AG04450 (cell line): ENCODE measurements at regions of chr17 and their contacts with region 1.

Region 1: GRCh38 chr17:1365445-1366039 is 34.5 kb downstream of the YWHAE start:
- DNase-seq: peak; percentile 72
- H3K4me3 ChIP-seq: no peak overlapping the region
- H3K27ac ChIP-seq: peak overlapping the region; percentile 47
- H3K27me3 ChIP-seq: no peaks in the 10 kb centered on the region
- CTCF ChIP-seq: peak; percentile 94

Region 2: DNA sequence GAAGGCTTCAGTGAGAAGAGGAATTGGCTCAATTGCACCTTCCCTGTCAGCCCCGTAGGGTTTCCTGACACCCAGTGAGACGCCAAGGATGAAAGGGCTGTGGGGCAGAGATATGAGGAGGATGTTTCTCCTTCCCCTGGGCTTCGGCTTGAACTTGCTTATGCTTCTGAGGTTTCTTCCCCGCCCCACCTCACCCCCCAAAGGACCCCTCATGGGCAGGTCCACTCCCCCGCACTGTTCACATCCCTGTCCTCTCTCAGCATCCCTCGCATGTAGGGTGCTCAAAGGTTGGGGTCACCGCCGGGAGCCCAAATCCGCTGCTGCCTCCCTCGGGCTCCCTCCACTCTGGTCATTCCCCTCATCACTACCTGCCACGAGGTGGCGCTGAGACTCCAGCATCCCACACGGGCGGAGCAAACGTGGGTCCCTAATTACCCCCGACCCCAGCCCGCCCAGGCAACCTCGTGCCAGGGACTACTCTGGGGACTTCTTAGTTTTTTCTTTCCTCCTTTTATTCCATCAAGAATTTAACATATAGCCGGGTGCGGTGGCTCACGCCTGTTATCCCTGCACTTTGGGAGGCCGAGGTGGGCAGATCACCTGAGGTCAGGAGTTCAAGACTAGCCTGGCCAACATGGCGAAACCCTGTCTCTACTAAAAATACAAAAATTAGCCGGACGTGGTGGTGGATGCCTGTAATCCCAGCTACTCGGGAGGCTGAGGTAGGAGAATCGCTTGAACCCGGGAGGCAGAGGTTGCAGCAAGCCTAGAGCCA is 89.4 kb before region 1 on chr17:
- CTCF ChIA-PET with region 1: no interaction called
- POLR2A ChIA-PET with region 1: no interaction called
- DNase-seq: no peak
- H3K4me3 ChIP-seq: no peak overlapping the region
- H3K27ac ChIP-seq: no peak overlapping the region
- H3K27me3 ChIP-seq: peaks cover 36% of the 10 kb centered on the region
- CTCF ChIP-seq: peak; percentile 85

Region 3: DNA sequence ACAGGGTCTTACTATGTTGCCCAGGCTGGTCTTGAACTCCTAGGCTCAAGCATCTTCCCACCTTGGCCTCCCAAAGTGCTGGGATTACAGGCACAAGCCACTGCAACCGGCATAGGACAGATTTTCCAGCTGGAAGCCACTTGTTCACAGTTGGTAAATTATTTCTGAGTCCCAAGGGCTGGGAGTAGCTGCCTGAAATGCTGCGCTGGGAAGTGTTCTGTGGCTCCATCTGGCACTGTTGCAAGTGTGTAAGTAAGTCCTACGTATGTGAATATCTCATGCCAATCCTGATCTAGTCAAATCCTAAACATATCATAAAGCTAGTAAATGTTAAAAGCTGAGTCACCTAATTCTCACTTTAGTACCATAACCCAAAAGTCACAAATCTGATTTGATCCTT is 13.6 kb before region 1 on chr17:
- CTCF ChIA-PET with region 1: interaction called, 22 read pairs
- POLR2A ChIA-PET with region 1: no interaction called
- DNase-seq: no peak
- H3K4me3 ChIP-seq: no peak overlapping the region
- H3K27ac ChIP-seq: no peak overlapping the region
- H3K27me3 ChIP-seq: no peaks in the 10 kb centered on the region
- CTCF ChIP-seq: no peak

Region 4: GRCh38 chr17:1384905-1385435 is 19.4 kb after region 1 on chr17:
- CTCF ChIA-PET with region 1: interaction called, 78 read pairs
- POLR2A ChIA-PET with region 1: interaction called, 4 read pairs
- DNase-seq: no peak
- H3K4me3 ChIP-seq: no peak overlapping the region
- H3K27ac ChIP-seq: no peak overlapping the region
- H3K27me3 ChIP-seq: no peaks in the 10 kb centered on the region
- CTCF ChIP-seq: no peak

Region 5: GRCh38 chr17:1399679-1400512 is 34.4 kb after region 1 on chr17 and contains the start of gene YWHAE:
- CTCF ChIA-PET with region 1: interaction called, 24 read pairs
- POLR2A ChIA-PET with region 1: interaction called, 15 read pairs
- DNase-seq: peak; percentile 78
- H3K4me3 ChIP-seq: peak within 1 kb of the TSS; percentile 88
- H3K27ac ChIP-seq: peak within 1 kb of the TSS; percentile 94
- H3K27me3 ChIP-seq: no peaks in the 10 kb centered on the region
- CTCF ChIP-seq: no peak
- polyA plus RNA-seq, gene YWHAE: 884 and 1,187 TPM in 2 replicates

Region 6: DNA sequence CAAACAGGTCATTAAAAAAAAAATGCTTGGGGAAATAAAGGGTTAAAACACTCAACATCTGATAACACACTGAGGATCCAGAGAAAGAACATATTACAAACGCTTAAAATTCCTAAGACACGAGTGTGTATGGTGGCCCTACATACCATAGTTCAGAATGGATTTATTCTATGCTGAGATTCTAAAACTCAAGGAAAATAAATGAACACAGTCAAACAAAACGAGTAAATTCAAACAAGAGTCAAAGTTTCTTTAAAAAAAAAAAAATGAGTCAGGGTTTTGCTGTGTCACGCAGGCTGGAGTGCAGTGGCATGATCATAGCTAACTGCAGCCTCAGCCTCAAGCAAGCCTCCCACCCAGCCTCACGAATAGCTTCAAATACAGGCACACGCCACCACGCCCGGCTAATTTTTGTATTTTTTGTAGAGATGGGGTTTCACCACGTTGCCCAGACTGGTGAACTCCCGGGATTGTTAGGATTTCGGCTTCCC is 73.1 kb after region 1 on chr17:
- CTCF ChIA-PET with region 1: interaction called, 10 read pairs
- POLR2A ChIA-PET with region 1: no interaction called
- DNase-seq: peak; percentile 67
- H3K4me3 ChIP-seq: no peak overlapping the region
- H3K27ac ChIP-seq: peak overlapping the region; percentile 98
- H3K27me3 ChIP-seq: no peaks in the 10 kb centered on the region
- CTCF ChIP-seq: no peak